ENCODE measurements at regions of chr18 and their contacts with region 1.

Region 1: DNA sequence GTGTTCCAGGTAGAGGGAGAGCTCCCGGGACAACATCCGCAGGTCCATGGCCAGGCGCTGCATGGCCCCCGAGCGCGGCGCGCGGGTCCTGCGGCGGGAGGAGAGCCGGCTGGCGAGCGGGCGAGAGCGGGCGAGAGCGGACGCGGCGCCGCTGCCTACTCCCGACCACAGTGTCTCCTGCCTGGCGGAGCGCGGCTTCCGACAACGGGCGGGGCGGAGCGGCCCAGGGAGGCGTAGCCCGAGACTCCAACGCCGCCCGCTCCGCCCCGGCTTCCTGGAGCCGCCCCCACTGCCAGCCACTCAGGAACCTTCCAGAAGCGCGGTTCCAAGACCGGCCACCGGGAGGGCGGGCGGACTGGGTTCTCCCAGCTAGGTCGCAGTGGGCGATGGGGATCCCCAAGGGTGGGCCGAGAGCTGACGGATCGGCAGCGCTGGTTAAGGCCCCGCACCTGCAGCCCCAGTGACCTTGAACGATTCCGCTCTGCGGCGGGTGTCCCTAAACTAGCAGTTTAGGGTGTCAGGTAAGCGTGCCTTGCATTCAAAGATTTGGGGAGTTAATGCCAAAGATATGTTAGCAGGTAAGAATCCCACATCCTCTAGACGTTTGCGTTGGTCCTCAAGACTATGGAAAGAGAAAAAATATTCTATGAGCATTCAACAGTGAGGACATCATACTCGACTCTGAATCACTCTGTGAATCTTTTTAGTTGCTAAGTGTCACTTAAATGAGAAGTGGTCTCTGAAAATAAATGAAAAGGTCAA is at the start of gene ABHD3:
- DNase-seq: peak; percentile 83 to 96 (median 91)
- ATAC-seq: peak; percentile 92
- H3K4me3 ChIP-seq: peak within 1 kb of the TSS; percentile 81 to 99
- H3K4me3 Mint-ChIP-seq: peak within 1 kb of the TSS; percentile 96
- H3K27ac ChIP-seq: peak within 1 kb of the TSS; percentile 66 to 82
- H3K27ac Mint-ChIP-seq: peak within 1 kb of the TSS; percentile 94
- H3K4me1 ChIP-seq: peaks cover 25% of the 10 kb centered on the region
- H3K4me1 Mint-ChIP-seq: peaks cover 39% of the 10 kb centered on the region
- H3K27me3 ChIP-seq: no peaks in the 10 kb centered on the region
- H3K27me3 Mint-ChIP-seq: no peaks in the 10 kb centered on the region
- CTCF ChIP-seq: peak; percentile 41
- total RNA-seq, gene ABHD3: 28.9 to 34.3 TPM

Region 2: DNA sequence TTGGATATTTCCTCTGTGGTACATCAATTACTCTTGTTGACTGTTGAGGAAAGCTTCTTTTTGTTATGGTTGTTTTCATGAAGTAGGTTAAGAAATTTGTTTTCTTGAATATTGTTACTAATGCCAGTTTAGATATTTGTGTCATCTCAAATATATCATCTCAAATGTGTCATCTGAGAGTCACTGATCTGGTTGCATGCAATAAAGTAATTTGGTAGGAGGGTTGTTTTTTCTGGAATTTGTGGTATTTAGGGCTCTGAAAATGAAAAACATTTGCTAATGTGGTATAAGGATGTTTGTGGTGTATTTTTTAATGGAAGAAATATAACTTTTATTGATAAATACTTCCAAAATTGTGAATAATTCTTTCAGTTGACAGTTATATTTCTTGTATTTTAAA is 345.0 kb before region 1 on chr18:
- CTCF ChIA-PET with region 1: no interaction called
- POLR2A ChIA-PET with region 1: no interaction called
- intact Hi-C with region 1: no loop called
- DNase-seq: no peak
- ATAC-seq: no peak
- H3K4me3 ChIP-seq: no peak overlapping the region
- H3K4me3 Mint-ChIP-seq: no peak overlapping the region
- H3K27ac ChIP-seq: no peak overlapping the region
- H3K27ac Mint-ChIP-seq: no peak overlapping the region
- H3K4me1 ChIP-seq: no peaks in the 10 kb centered on the region
- H3K4me1 Mint-ChIP-seq: no peaks in the 10 kb centered on the region
- H3K27me3 ChIP-seq: no peaks in the 10 kb centered on the region
- H3K27me3 Mint-ChIP-seq: peaks cover 14% of the 10 kb centered on the region
- CTCF ChIP-seq: no peak

Region 3: GRCh38 chr18:21612125-21612991 is 92.4 kb before region 1 on chr18 and contains the start of gene SNRPD1:
- CTCF ChIA-PET with region 1: interaction called, 10 read pairs
- POLR2A ChIA-PET with region 1: no interaction called
- intact Hi-C with region 1: loop called (anchors 1 kb)
- DNase-seq: peak; percentile 78 to 94 (median 86)
- ATAC-seq: peak; percentile 98
- H3K4me3 ChIP-seq: peak within 1 kb of the TSS; percentile 83 to 94
- H3K4me3 Mint-ChIP-seq: peak within 1 kb of the TSS; percentile 98
- H3K27ac ChIP-seq: peak within 1 kb of the TSS; percentile 84 to 87
- H3K27ac Mint-ChIP-seq: peak within 1 kb of the TSS; percentile 98
- H3K4me1 ChIP-seq: peaks cover 29% of the 10 kb centered on the region
- H3K4me1 Mint-ChIP-seq: peaks cover 44% of the 10 kb centered on the region
- H3K27me3 ChIP-seq: no peaks in the 10 kb centered on the region
- H3K27me3 Mint-ChIP-seq: no peaks in the 10 kb centered on the region
- CTCF ChIP-seq: peak; percentile 94
- total RNA-seq, gene SNRPD1: 34.5 to 41.1 TPM

Region 4: DNA sequence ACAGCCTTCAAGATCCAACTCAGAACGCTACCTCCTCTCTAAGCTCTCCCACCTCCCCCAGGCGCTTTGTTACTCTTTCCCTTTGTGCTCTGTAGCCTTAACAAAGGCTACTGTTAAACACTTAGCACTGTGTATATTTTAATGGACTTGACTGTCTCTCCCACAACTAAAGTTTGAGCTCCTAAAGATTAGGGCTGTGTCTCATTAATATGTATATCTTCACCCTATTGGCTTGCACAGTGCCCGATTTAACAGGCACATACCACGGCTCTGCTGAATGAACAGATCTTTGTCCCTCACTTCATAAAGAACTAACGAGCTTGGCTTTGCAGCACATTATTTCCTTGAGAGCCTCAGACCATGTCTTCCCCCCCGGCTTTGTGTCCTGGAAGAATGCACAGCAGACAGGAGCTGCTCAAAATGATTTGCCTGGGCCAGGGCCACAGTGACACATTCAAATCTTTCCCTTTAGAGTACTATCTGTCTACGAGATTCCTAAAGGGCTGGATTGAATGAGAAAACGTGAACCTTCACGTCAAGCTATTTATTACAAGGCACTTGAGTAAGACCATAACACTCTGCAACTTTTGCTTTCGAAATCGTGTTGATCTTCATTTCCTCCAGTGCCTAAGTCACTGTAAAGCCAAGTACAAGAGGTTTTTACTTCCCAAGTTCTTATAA is 22.3 kb before region 1 on chr18:
- CTCF ChIA-PET with region 1: interaction called, 4 read pairs
- POLR2A ChIA-PET with region 1: interaction called, 8 read pairs
- intact Hi-C with region 1: loop called (anchors 1 to 2 kb)
- DNase-seq: peak in 6 of 9 experiments; percentile 5 to 78 (median 46)
- ATAC-seq: peak; percentile 91
- H3K4me3 ChIP-seq: peak overlapping the region; percentile 56 to 58
- H3K4me3 Mint-ChIP-seq: no peak overlapping the region
- H3K27ac ChIP-seq: peak overlapping the region; percentile 75 to 90
- H3K27ac Mint-ChIP-seq: no peak overlapping the region
- H3K4me1 ChIP-seq: no peaks in the 10 kb centered on the region
- H3K4me1 Mint-ChIP-seq: peaks cover 24% of the 10 kb centered on the region
- H3K27me3 ChIP-seq: no peaks in the 10 kb centered on the region
- H3K27me3 Mint-ChIP-seq: no peaks in the 10 kb centered on the region
- CTCF ChIP-seq: no peak

Region 5: GRCh38 chr18:22703883-22704585 is 999.2 kb after region 1 on chr18:
- CTCF ChIA-PET with region 1: no interaction called
- POLR2A ChIA-PET with region 1: no interaction called
- intact Hi-C with region 1: no loop called
- DNase-seq: peak in 3 of 9 experiments; percentile 8 to 58 (median 44)
- ATAC-seq: no peak
- H3K4me3 ChIP-seq: no peak overlapping the region
- H3K4me3 Mint-ChIP-seq: no peak overlapping the region
- H3K27ac ChIP-seq: no peak overlapping the region
- H3K27ac Mint-ChIP-seq: no peak overlapping the region
- H3K4me1 ChIP-seq: no peaks in the 10 kb centered on the region
- H3K4me1 Mint-ChIP-seq: no peaks in the 10 kb centered on the region
- H3K27me3 ChIP-seq: no peaks in the 10 kb centered on the region
- H3K27me3 Mint-ChIP-seq: peaks cover 8% of the 10 kb centered on the region
- CTCF ChIP-seq: peak; percentile 78

Measured in CD8-positive, alpha-beta T cell (primary cell).